ENCODE measurements at regions of chr17 and their contacts with region 1.

Region 1: DNA sequence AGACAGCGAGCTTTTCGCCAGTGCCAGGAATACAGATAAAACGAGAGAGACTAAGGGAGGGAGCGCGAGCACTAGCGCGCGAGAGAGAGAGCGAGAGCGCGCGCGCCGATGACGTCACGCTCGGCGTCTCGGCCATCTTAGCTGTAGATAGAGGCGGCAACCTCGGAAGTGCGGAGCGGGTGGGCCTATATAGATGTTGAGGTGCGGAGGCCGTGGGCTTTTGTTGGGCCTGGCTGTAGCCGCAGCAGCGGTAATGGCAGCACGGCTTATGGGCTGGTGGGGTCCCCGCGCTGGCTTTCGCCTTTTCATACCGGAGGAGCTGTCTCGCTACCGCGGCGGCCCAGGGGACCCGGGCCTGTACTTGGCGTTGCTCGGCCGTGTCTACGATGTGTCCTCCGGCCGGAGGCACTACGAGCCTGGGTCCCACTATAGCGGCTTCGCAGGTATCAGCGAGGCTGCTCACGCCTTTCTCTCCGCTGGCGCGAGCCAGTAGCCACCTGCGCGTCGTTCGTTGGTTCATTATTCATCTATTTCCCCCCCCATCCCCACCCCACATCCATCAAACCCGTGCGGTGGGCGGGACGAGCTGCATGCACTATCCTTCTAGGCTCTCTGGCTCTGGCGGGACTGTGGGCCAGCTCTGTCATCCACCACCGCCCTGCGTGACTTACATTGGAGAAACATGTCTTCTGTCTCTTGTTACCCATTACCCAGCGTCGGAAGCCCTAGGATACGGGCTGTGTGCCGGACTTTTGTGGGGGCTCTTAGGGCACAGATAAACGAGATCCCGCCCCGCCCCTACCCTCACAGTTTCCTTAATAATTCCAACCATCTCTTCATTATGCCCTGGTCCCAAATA is 795 bp downstream of the CYB5D2 start:
- DNase-seq: peak; percentile 72 to 92 (median 79)
- ATAC-seq: peak; percentile 89
- H3K4me3 ChIP-seq: peak overlapping the region; percentile 98
- H3K27ac ChIP-seq: peak overlapping the region; percentile 94
- H3K4me1 ChIP-seq: peaks cover 3 to 10% of the 10 kb centered on the region in 2 experiments; a peak in 3 of 5 replicates
- H3K27me3 ChIP-seq: no peaks in the 10 kb centered on the region
- CTCF ChIP-seq: no peak
- EP300 ChIP-seq: no peak
- POLR2A ChIP-seq: peak; percentile 80
- RAD21 ChIP-seq: no peak

Region 2: DNA sequence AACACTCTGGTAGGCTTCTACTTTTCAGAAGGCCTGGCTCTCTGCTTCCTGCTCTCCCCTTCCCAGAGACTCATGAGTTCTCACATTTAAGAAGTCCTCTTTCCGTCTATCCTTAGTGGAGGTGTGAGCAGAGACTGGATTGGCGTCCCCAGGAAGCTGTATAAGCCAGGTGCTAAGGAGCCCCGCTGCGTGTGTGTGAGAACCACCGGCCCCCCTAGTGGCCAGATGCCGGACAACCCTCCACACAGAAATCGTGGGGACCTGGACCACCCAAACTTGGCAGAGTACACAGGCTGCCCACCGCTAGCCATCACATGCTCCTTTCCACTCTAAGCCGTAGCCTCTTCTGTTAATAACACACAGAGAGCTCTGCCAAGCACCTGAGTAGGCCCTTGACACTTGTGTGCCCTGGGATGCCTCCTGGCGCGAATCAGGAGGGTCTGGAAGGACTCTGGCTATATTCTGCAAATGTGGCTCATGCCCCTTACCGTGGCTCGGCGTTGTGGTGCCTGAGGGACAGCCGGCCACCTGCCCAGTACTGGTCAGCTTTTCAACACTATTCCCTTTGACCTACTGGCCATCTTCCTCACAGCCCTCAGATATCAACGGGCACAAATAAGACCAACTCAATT is 13.1 kb after region 1 on chr17:
- CTCF ChIA-PET with region 1: no interaction called
- POLR2A ChIA-PET with region 1: interaction called, 21 read pairs
- in situ Hi-C with region 1: no loop called
- intact Hi-C with region 1: no loop called
- DNase-seq: peak in 3 of 4 experiments; percentile 29 to 58 (median 56)
- ATAC-seq: peak; percentile 69
- H3K4me3 ChIP-seq: no peak overlapping the region
- H3K27ac ChIP-seq: no peak overlapping the region
- H3K4me1 ChIP-seq: peaks cover 7 to 9% of the 10 kb centered on the region in 2 experiments; a peak in 4 of 5 replicates
- H3K27me3 ChIP-seq: no peaks in the 10 kb centered on the region
- CTCF ChIP-seq: peak; percentile 27 to 42 (median 37); a peak in 5 of 6 replicates
- EP300 ChIP-seq: no peak
- POLR2A ChIP-seq: no peak
- RAD21 ChIP-seq: no peak

Region 3: GRCh38 chr17:4287710-4288109 is 143.9 kb after region 1 on chr17:
- CTCF ChIA-PET with region 1: no interaction called
- POLR2A ChIA-PET with region 1: no interaction called
- in situ Hi-C with region 1: no loop called
- intact Hi-C with region 1: no loop called
- DNase-seq: no peak
- ATAC-seq: no peak
- H3K4me3 ChIP-seq: no peak overlapping the region
- H3K27ac ChIP-seq: no peak overlapping the region
- H3K4me1 ChIP-seq: no peaks in the 10 kb centered on the region
- H3K27me3 ChIP-seq: no peaks in the 10 kb centered on the region
- CTCF ChIP-seq: no peak
- EP300 ChIP-seq: no peak
- POLR2A ChIP-seq: no peak
- RAD21 ChIP-seq: no peak

Region 4: DNA sequence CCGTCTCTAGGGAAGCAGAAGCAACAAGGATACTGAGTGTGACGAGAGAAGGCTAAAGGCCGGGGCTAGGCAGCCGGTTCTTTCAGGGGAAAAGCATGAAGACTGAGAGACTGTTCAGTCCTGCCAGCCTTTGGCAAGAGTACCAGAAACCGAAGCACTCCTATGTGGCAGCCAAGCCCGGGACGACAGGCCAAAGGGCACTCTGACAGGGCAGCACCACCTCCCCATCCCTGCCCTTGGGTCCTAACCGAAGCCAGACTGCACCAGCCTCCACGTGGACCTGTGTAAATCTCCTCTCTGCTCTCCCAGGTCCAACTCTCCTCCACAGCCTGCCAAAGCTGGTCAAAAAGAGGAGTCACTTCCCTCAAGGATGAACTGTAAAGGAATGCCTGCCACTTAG is 521.2 kb after region 1 on chr17:
- CTCF ChIA-PET with region 1: no interaction called
- POLR2A ChIA-PET with region 1: no interaction called
- in situ Hi-C with region 1: no loop called
- intact Hi-C with region 1: no loop called
- DNase-seq: no peak
- ATAC-seq: no peak
- H3K4me3 ChIP-seq: no peak overlapping the region
- H3K27ac ChIP-seq: no peak overlapping the region
- H3K4me1 ChIP-seq: peaks cover 7 to 17% of the 10 kb centered on the region in 2 experiments; a peak in 3 of 5 replicates
- H3K27me3 ChIP-seq: no peaks in the 10 kb centered on the region
- CTCF ChIP-seq: no peak
- EP300 ChIP-seq: no peak
- POLR2A ChIP-seq: no peak
- RAD21 ChIP-seq: no peak

Measured in K562 (cell line).